ENCODE measurements at regions of chr14 and their contacts with region 1.

Region 1: GRCh38 chr14:65847075-65847847 is 434.7 kb downstream of the FUT8 start:
- DNase-seq: peak; percentile 41 to 93 (median 70)
- ATAC-seq: peak; percentile 87
- H3K4me3 ChIP-seq: peak overlapping the region; percentile 13 to 21
- H3K4me3 Mint-ChIP-seq: peak overlapping the region; percentile 71
- H3K27ac ChIP-seq: peak overlapping the region; percentile 57 to 84
- H3K27ac Mint-ChIP-seq: peak overlapping the region; percentile 92
- H3K4me1 ChIP-seq: peaks cover 90% of the 10 kb centered on the region
- H3K4me1 Mint-ChIP-seq: peaks cover 85% of the 10 kb centered on the region
- H3K27me3 ChIP-seq: no peaks in the 10 kb centered on the region
- H3K27me3 Mint-ChIP-seq: no peaks in the 10 kb centered on the region
- CTCF ChIP-seq: no peak

Region 2: GRCh38 chr14:65281991-65282895 is 565.0 kb before region 1 on chr14:
- CTCF ChIA-PET with region 1: no interaction called
- POLR2A ChIA-PET with region 1: interaction called, 3 read pairs
- intact Hi-C with region 1: loop called in 1 of 2 experiments (anchors 10 kb)
- DNase-seq: peak in 3 of 9 experiments; percentile 32 to 58 (median 42)
- ATAC-seq: peak; percentile 51
- H3K4me3 ChIP-seq: peak overlapping the region; percentile 25 to 32
- H3K4me3 Mint-ChIP-seq: peak overlapping the region; percentile 83
- H3K27ac ChIP-seq: peak overlapping the region; percentile 19 to 55
- H3K27ac Mint-ChIP-seq: peak overlapping the region; percentile 95
- H3K4me1 ChIP-seq: peaks cover 32% of the 10 kb centered on the region
- H3K4me1 Mint-ChIP-seq: peaks cover 42% of the 10 kb centered on the region
- H3K27me3 ChIP-seq: no peaks in the 10 kb centered on the region
- H3K27me3 Mint-ChIP-seq: no peaks in the 10 kb centered on the region
- CTCF ChIP-seq: no peak

Region 3: DNA sequence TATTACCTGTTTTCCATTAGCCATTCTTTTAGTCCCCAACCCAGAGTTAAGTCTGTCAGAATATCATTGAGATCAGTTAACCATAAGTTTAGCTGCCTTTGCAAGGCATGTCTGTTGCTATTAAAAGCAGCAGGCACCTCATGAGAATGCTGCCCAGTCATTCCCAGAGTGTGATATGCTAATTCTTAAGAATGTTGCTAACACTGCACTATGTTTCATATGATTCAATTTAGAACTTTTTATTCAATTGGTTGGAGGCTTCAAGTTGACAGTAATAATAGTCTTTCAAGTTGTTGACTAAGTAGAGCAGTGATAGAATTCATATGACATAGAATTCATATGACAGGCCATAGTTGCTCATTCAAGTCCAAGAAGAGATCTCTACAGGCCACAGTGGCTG is 142.4 kb before region 1 on chr14:
- CTCF ChIA-PET with region 1: no interaction called
- POLR2A ChIA-PET with region 1: no interaction called
- intact Hi-C with region 1: no loop called
- DNase-seq: no peak
- ATAC-seq: no peak
- H3K4me3 ChIP-seq: no peak overlapping the region
- H3K4me3 Mint-ChIP-seq: no peak overlapping the region
- H3K27ac ChIP-seq: no peak overlapping the region
- H3K27ac Mint-ChIP-seq: no peak overlapping the region
- H3K4me1 ChIP-seq: no peaks in the 10 kb centered on the region
- H3K4me1 Mint-ChIP-seq: peaks cover 18% of the 10 kb centered on the region
- H3K27me3 ChIP-seq: no peaks in the 10 kb centered on the region
- H3K27me3 Mint-ChIP-seq: no peaks in the 10 kb centered on the region
- CTCF ChIP-seq: no peak

Region 4: DNA sequence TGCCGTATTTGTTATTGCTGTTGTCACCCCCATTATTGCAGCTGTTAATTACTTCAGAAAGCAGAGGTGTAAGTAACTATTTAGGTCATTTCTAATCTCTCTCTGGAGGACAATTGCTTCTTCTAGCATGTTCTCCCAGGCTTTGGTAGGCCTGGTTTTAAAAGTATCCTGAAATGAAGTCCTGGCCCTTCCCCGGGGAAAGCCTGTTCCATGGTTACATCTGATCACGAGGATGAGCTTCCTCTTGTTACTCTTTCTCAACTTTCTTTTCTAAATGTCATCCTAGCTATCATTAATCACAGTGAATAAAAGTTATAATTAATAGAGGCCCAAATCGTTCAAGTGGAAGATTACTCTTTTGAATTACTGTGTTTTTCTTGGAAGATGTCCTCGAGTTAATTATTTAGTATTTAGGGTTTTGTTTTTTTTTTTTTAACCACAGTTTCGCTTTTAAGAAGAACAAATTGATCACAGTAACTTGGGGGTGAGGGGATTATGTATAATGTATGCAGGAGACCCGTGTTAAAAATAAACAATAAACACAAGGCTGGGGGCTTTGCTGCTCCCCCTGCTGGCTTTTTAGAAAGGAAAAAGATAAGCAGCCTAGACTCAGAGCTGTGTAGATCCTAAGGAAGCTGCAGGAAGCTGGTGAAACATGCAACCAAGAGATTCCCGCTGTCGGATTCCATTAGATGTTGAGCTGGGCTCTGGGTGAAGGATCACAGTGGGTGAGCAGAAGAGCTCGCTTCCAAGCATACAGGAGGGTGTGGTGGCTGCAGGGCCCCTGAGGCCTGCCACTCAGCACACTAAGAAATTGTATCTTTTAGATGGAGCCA is 14.6 kb before region 1 on chr14:
- CTCF ChIA-PET with region 1: interaction called, 22 read pairs
- POLR2A ChIA-PET with region 1: interaction called, 15 read pairs
- intact Hi-C with region 1: no loop called
- DNase-seq: no peak
- ATAC-seq: no peak
- H3K4me3 ChIP-seq: no peak overlapping the region
- H3K4me3 Mint-ChIP-seq: no peak overlapping the region
- H3K27ac ChIP-seq: no peak overlapping the region
- H3K27ac Mint-ChIP-seq: no peak overlapping the region
- H3K4me1 ChIP-seq: peaks cover 13% of the 10 kb centered on the region
- H3K4me1 Mint-ChIP-seq: peaks cover 44% of the 10 kb centered on the region
- H3K27me3 ChIP-seq: no peaks in the 10 kb centered on the region
- H3K27me3 Mint-ChIP-seq: no peaks in the 10 kb centered on the region
- CTCF ChIP-seq: no peak

Region 5: DNA sequence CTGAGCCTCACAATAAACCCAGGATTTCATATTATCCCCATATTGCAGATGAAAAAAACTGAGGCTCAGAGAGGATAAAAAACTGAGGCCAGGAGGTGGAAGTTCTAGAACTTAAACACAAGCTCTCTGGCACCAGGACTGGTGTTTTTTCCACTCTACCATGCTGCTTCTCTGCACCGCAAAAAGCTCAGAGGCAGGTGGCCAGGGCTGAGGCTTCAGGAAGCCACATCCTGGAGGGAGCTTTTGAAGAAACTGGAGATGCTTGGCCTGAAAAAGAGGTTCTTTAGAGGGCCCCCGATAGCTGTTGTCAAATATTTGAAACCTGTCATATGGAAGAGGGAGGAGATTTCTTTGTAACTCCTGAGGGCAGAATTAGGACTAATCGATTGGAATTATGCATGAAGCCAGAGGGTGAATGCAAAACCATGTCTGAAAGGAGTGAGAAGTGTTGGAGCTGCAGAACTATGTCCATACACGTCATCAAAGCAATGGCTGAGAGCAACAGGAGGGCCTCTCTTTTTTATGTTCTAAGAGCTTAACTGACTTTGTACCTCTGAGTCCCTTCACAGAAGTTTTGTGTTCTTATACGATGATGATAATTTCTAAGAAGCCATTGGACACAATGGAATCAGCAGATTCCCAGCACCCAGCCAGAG is 13.8 kb after region 1 on chr14:
- CTCF ChIA-PET with region 1: interaction called, 6 read pairs
- POLR2A ChIA-PET with region 1: interaction called, 19 read pairs
- intact Hi-C with region 1: no loop called
- DNase-seq: peak in 6 of 9 experiments; percentile 22 to 66 (median 32)
- ATAC-seq: peak; percentile 54
- H3K4me3 ChIP-seq: no peak overlapping the region
- H3K4me3 Mint-ChIP-seq: peak overlapping the region; percentile 27
- H3K27ac ChIP-seq: peak overlapping the region in 1 of 2 experiments; percentile 2
- H3K27ac Mint-ChIP-seq: peak overlapping the region; percentile 66
- H3K4me1 ChIP-seq: peaks cover 58% of the 10 kb centered on the region
- H3K4me1 Mint-ChIP-seq: peaks cover 67% of the 10 kb centered on the region
- H3K27me3 ChIP-seq: no peaks in the 10 kb centered on the region
- H3K27me3 Mint-ChIP-seq: no peaks in the 10 kb centered on the region
- CTCF ChIP-seq: no peak

Region 6: GRCh38 chr14:65879248-65880009 is 32.2 kb after region 1 on chr14:
- CTCF ChIA-PET with region 1: interaction called, 4 read pairs
- POLR2A ChIA-PET with region 1: interaction called, 6 read pairs
- intact Hi-C with region 1: loop called in 1 of 2 experiments (anchors 2 kb)
- DNase-seq: no peak
- ATAC-seq: no peak
- H3K4me3 ChIP-seq: no peak overlapping the region
- H3K4me3 Mint-ChIP-seq: no peak overlapping the region
- H3K27ac ChIP-seq: no peak overlapping the region
- H3K27ac Mint-ChIP-seq: peak overlapping the region; percentile 64
- H3K4me1 ChIP-seq: peaks cover 37% of the 10 kb centered on the region
- H3K4me1 Mint-ChIP-seq: peaks cover 29% of the 10 kb centered on the region
- H3K27me3 ChIP-seq: no peaks in the 10 kb centered on the region
- H3K27me3 Mint-ChIP-seq: no peaks in the 10 kb centered on the region
- CTCF ChIP-seq: no peak

Region 7: GRCh38 chr14:65927931-65928356 is 80.7 kb after region 1 on chr14:
- CTCF ChIA-PET with region 1: interaction called, 9 read pairs
- POLR2A ChIA-PET with region 1: interaction called, 18 read pairs
- intact Hi-C with region 1: loop called (anchors 1 to 5 kb)
- DNase-seq: peak; percentile 41 to 84 (median 77)
- ATAC-seq: peak; percentile 89
- H3K4me3 ChIP-seq: no peak overlapping the region
- H3K4me3 Mint-ChIP-seq: peak overlapping the region; percentile 56
- H3K27ac ChIP-seq: peak overlapping the region; percentile 43 to 68
- H3K27ac Mint-ChIP-seq: peak overlapping the region; percentile 87
- H3K4me1 ChIP-seq: peaks cover 45% of the 10 kb centered on the region
- H3K4me1 Mint-ChIP-seq: peaks cover 55% of the 10 kb centered on the region
- H3K27me3 ChIP-seq: no peaks in the 10 kb centered on the region
- H3K27me3 Mint-ChIP-seq: no peaks in the 10 kb centered on the region
- CTCF ChIP-seq: no peak

Region 8: GRCh38 chr14:66568220-66568619 is 721.0 kb after region 1 on chr14:
- CTCF ChIA-PET with region 1: no interaction called
- POLR2A ChIA-PET with region 1: no interaction called
- intact Hi-C with region 1: no loop called
- DNase-seq: peak in 1 of 9 experiments; percentile 1
- ATAC-seq: no peak
- H3K4me3 ChIP-seq: no peak overlapping the region
- H3K4me3 Mint-ChIP-seq: no peak overlapping the region
- H3K27ac ChIP-seq: no peak overlapping the region
- H3K27ac Mint-ChIP-seq: no peak overlapping the region
- H3K4me1 ChIP-seq: no peaks in the 10 kb centered on the region
- H3K4me1 Mint-ChIP-seq: no peaks in the 10 kb centered on the region
- H3K27me3 ChIP-seq: no peaks in the 10 kb centered on the region
- H3K27me3 Mint-ChIP-seq: no peaks in the 10 kb centered on the region
- CTCF ChIP-seq: no peak

Region 9: DNA sequence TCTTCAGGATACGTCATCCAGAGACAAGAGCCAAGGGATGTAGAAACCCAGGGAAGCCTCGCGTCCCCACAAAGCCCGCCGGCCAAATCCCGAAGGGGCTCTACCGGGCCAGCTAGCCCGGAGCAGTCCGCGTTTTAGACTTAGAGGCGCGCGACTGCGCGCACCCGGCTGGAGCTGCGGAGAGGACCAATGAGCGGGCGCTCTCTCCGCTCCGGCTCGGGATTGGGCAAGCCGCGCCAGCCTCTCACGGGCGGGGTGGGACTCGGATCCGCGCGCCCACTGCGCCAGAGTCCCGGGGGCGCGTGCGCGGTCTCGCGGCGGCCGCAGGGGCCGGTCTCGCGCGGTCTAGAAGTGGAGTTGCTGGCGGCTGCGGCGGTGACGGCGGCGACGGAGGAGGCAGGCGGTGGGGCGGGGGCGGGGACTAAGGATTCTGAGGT is 1393.7 kb after region 1 on chr14:
- CTCF ChIA-PET with region 1: no interaction called
- POLR2A ChIA-PET with region 1: no interaction called
- intact Hi-C with region 1: loop called in 1 of 2 experiments (anchors 10 kb)
- DNase-seq: peak; percentile 81 to 96 (median 91)
- ATAC-seq: peak; percentile 93
- H3K4me3 ChIP-seq: peak overlapping the region; percentile 65 to 76
- H3K4me3 Mint-ChIP-seq: peak overlapping the region; percentile 91
- H3K27ac ChIP-seq: peak overlapping the region; percentile 62
- H3K27ac Mint-ChIP-seq: peak overlapping the region; percentile 82
- H3K4me1 ChIP-seq: peaks cover 14% of the 10 kb centered on the region
- H3K4me1 Mint-ChIP-seq: peaks cover 29% of the 10 kb centered on the region
- H3K27me3 ChIP-seq: no peaks in the 10 kb centered on the region
- H3K27me3 Mint-ChIP-seq: no peaks in the 10 kb centered on the region
- CTCF ChIP-seq: no peak